Sigmoid colon (tissue), 7 donors: ENCODE measurements at regions of chr5 and their contacts with region 1.

Region 1: DNA sequence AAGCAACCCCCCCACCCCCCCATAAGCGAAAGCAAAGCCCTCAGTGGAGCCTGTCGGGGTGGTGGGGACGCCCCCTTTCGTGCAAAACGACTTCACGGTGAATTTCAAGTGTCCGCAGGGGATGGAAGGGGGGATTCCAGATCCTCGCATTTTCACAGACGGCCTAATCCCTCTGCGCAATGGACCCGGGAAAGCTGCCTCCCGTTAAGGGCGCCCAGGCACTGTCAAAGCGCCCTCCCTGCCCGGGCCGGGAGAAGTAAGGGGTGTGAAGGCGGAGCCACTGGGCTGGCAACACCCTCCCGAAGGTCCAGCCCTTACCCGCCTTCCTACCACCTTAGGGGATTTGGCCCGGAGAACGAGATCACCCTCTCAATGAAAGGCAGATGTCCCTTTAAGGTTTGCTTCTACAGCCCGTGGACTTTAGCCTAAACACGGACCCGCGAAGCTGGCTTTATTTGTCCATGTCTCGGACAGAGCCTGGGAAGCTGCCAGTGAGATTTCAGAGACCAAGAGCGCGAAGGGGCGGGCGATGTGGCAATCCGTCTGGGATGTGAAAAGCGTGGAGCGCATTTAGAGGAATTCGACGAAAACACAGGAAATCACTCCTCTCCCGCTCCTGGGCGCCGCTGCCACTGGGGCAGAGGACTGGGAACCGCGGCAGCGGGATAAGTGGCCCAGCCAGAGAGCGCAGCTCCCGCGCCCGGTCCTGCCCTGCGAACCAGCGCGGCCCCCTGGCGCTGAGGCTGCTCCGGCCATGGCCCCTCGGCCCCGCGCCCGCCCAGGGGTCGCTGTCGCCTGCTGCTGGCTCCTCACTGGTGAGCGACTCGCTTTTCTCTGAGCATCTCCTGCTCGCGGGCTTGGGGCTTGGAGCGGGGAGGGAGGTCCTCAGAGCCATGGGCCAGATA is at the starts of genes ITGA1 and PELO:
- DNase-seq: peak; percentile 95
- H3K4me3 ChIP-seq: peak within 1 kb of the TSS; percentile 75 to 83 (median 80)
- H3K27ac ChIP-seq: peak within 1 kb of the TSS; percentile 91 to 97 (median 95)
- H3K4me1 ChIP-seq: peaks cover 0 to 40% (median 26%) of the 10 kb centered on the region in 4 donors
- H3K27me3 ChIP-seq: no peaks in the 10 kb centered on the region
- CTCF ChIP-seq: peak in 1 of 4 experiments; percentile 22
- EP300 ChIP-seq: peak in 2 of 4 donors; percentile 3 to 10
- POLR2A ChIP-seq: peak; percentile 23 to 32
- total RNA-seq, gene ITGA1: 162 to 511 (median 209) TPM
- total RNA-seq, gene PELO: 37.1 to 60.1 (median 44.7) TPM

Region 2: GRCh38 chr5:52725065-52725746 is 62.6 kb before region 1 on chr5:
- intact Hi-C with region 1: loop called (anchors 5 kb)
- DNase-seq: no peak
- H3K4me3 ChIP-seq: no peak overlapping the region
- H3K27ac ChIP-seq: peak overlapping the region; percentile 58 to 82 (median 68)
- H3K4me1 ChIP-seq: peaks cover 0 to 43% (median 36%) of the 10 kb centered on the region in 4 donors
- H3K27me3 ChIP-seq: no peaks in the 10 kb centered on the region
- CTCF ChIP-seq: no peak
- EP300 ChIP-seq: no peak
- POLR2A ChIP-seq: no peak

Region 3: GRCh38 chr5:52864371-52864770 is 76.5 kb after region 1 on chr5:
- intact Hi-C with region 1: loop called (anchors 5 kb)
- DNase-seq: no peak
- H3K4me3 ChIP-seq: no peak overlapping the region
- H3K27ac ChIP-seq: peak overlapping the region; percentile 54 to 78 (median 72)
- H3K4me1 ChIP-seq: peaks cover 0 to 75% (median 44%) of the 10 kb centered on the region in 4 donors
- H3K27me3 ChIP-seq: no peaks in the 10 kb centered on the region
- CTCF ChIP-seq: no peak
- EP300 ChIP-seq: no peak
- POLR2A ChIP-seq: no peak

Region 4: DNA sequence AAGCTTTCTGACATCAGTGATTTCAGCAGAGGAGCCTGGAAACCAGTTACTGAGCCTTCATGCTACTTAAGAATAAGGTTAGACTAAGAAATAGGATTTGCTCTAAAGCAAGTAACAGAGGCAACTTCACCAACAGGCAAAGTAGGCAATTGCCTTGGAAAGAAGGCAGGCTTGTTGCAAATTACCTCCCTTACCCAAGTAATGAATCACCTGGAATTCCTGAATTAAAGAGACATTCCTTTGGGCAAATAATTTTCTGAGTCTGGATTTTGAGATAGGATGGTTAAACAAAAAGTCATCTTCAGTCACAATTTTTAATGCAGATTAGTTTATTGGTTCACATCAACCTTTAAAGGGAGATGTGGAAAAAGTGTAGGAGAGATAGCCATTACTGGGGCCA is 92.7 kb after region 1 on chr5:
- intact Hi-C with region 1: no loop called
- DNase-seq: no peak
- H3K4me3 ChIP-seq: no peak overlapping the region
- H3K27ac ChIP-seq: peak overlapping the region in 1 of 4 donors; percentile 3
- H3K4me1 ChIP-seq: peaks cover 0 to 24% (median 12%) of the 10 kb centered on the region in 4 donors
- H3K27me3 ChIP-seq: no peaks in the 10 kb centered on the region
- CTCF ChIP-seq: no peak
- EP300 ChIP-seq: no peak
- POLR2A ChIP-seq: no peak

Region 5: DNA sequence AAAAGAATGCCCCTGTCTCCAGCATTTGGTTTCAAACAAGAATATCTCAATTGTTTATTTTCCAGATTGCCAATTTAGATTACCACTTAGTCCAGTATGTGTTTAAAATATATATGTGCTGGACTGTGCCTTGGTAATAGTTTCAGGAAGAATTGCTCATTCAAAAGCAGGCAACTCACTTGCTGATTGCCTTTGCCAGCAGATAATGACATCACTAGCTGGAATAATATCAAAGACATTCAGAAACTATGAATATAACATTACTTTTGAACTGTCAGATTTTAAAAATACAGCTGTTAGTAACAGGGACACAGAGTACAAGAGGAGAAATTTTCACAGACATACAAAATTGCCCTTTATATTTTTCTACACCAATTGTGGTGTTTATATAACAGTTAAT is 105.3 kb after region 1 on chr5:
- intact Hi-C with region 1: no loop called
- DNase-seq: no peak
- H3K4me3 ChIP-seq: no peak overlapping the region
- H3K27ac ChIP-seq: peak overlapping the region; percentile 44 to 77 (median 62)
- H3K4me1 ChIP-seq: peaks cover 0 to 61% (median 46%) of the 10 kb centered on the region in 4 donors
- H3K27me3 ChIP-seq: no peaks in the 10 kb centered on the region
- CTCF ChIP-seq: no peak
- EP300 ChIP-seq: no peak
- POLR2A ChIP-seq: no peak

Region 6: GRCh38 chr5:52915176-52915875 is 127.5 kb after region 1 on chr5:
- intact Hi-C with region 1: loop called (anchors 1 kb)
- DNase-seq: peak; percentile 70
- H3K4me3 ChIP-seq: peak overlapping the region in 1 of 4 donors; percentile 31
- H3K27ac ChIP-seq: peak overlapping the region; percentile 1 to 59 (median 34)
- H3K4me1 ChIP-seq: peaks cover 0 to 21% (median 9%) of the 10 kb centered on the region in 4 donors
- H3K27me3 ChIP-seq: no peaks in the 10 kb centered on the region
- CTCF ChIP-seq: peak; percentile 55 to 76 (median 68)
- EP300 ChIP-seq: no peak
- POLR2A ChIP-seq: no peak

Region 7: DNA sequence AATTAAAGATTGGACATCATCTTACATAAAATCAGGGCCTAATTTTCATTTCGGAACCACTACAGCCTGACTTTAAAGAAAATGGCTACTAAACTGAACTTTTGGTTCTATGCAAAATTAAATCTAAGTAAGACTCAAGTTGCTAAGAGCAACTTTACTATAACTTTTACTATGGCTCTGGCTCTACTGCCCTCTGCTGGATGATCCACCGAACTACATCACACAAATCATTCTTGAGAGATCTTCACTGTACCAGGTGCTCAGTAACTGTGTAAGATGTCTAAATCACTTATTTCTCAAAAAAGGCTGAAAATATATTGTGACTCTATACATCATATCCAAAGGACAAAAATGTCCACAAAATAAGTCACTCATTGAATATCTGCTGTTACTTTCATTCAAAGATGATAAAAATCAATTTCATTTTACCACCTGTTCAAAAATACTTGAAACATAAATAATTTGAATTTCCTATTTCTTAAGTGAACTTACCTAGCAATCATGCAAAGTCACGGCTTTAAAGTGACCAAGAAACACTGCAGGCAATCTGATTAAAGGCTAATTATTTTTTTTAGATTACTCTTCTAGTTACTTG is 308.2 kb after region 1 on chr5:
- intact Hi-C with region 1: loop called (anchors 1 kb)
- DNase-seq: peak; percentile 81
- H3K4me3 ChIP-seq: no peak overlapping the region
- H3K27ac ChIP-seq: peak overlapping the region in 1 of 4 donors; percentile 0
- H3K4me1 ChIP-seq: peaks cover 0 to 27% (median 7%) of the 10 kb centered on the region in 4 donors
- H3K27me3 ChIP-seq: no peaks in the 10 kb centered on the region
- CTCF ChIP-seq: peak; percentile 60 to 86 (median 79)
- EP300 ChIP-seq: no peak
- POLR2A ChIP-seq: no peak